ENCODE measurements at regions of chr14 and their contacts with region 1.

Region 1: GRCh38 chr14:21987937-21988336 is 314.3 kb upstream of the OR4E1 start:
- DNase-seq: peak; percentile 25
- ATAC-seq: peak; percentile 72
- H3K4me3 Mint-ChIP-seq: peak overlapping the region; percentile 57
- H3K27ac Mint-ChIP-seq: peak overlapping the region; percentile 86
- H3K4me1 Mint-ChIP-seq: peaks cover 28% of the 10 kb centered on the region
- H3K27me3 Mint-ChIP-seq: peaks cover 2% of the 10 kb centered on the region

Region 2: DNA sequence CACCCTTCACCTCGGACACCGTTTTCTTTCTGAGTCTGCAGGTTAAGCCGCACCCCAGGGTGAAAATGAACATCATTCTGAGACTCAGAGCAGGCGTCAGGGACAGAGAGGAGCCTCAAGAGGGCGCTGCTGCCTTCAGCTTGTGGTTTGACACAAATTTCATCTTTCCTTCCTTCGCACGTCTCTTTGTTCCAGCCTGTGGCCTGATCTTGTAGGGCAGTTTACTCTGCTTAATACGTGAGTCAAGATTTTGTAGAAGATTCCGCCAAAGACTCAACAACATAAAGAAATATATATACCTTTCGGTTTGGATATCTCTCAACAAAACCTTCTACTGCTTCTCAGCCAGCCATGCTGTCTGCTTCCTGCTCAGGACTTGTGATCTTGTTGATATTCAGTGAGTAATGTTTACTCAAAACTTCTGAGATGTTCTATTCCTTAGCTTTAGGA is 14.9 kb after region 1 on chr14:
- CTCF ChIA-PET with region 1: interaction called, 29 read pairs
- POLR2A ChIA-PET with region 1: no interaction called
- intact Hi-C with region 1: no loop called
- DNase-seq: peak; percentile 87
- ATAC-seq: peak; percentile 80
- H3K4me3 Mint-ChIP-seq: peak overlapping the region; percentile 80
- H3K27ac Mint-ChIP-seq: peak overlapping the region; percentile 83
- H3K4me1 Mint-ChIP-seq: peaks cover 26% of the 10 kb centered on the region
- H3K27me3 Mint-ChIP-seq: no peaks in the 10 kb centered on the region

Region 3: GRCh38 chr14:22039938-22040775 is 52.2 kb after region 1 on chr14:
- CTCF ChIA-PET with region 1: interaction called, 11 read pairs
- POLR2A ChIA-PET with region 1: no interaction called
- intact Hi-C with region 1: no loop called
- DNase-seq: peak; percentile 70
- ATAC-seq: peak; percentile 94
- H3K4me3 Mint-ChIP-seq: peak overlapping the region; percentile 73
- H3K27ac Mint-ChIP-seq: peak overlapping the region; percentile 70
- H3K4me1 Mint-ChIP-seq: peaks cover 12% of the 10 kb centered on the region
- H3K27me3 Mint-ChIP-seq: no peaks in the 10 kb centered on the region

Region 4: DNA sequence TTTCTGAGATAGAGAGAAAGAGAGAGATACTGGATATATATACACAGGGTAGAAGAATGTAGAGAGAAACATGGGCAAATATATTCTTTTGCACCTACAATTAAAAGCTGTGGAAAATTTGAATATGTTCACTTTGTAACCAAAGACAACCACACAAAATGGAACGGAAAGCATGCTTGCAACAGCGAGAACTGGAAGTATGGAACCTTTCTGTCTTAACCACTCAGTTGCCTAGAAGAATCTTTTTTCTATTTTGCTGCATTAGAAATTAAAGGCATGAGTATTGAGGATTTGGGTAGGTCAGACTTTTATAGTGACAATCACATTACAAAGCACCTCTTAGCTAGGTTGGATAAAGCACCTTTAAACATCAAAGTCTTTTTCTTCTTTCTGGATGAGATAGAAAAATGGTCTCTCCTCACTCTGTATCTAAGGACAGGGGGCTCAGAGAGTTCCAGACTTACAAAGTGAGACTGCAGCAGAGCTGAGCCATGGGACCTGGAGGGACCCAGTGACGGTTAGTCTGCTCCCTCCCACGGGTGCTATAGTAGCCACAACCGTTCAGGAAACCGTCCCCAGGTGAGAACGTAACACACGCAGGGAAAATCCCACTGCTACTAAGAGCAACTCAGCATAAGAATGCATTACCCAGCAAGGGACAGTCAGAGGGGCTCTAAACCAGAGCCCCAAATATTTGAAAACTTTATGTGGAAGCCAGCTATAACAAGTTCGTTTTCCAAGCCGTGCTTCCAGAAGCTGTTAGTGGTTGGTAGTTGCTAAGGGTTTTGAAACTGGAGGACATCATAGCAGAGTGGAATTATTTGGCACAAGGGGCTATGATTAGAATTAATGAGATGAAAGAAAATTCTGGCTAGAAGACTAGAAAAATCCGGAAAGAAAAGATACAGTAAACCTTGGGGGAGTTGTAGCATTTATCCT is 504.0 kb after region 1 on chr14:
- CTCF ChIA-PET with region 1: no interaction called
- POLR2A ChIA-PET with region 1: no interaction called
- intact Hi-C with region 1: loop called in 1 of 2 experiments (anchors 5 kb)
- DNase-seq: peak; percentile 65
- ATAC-seq: peak; percentile 37
- H3K4me3 Mint-ChIP-seq: peak overlapping the region; percentile 84
- H3K27ac Mint-ChIP-seq: peak overlapping the region; percentile 99
- H3K4me1 Mint-ChIP-seq: peaks cover 7% of the 10 kb centered on the region
- H3K27me3 Mint-ChIP-seq: no peaks in the 10 kb centered on the region

Region 5: GRCh38 chr14:22653012-22653621 is 665.2 kb after region 1 on chr14:
- CTCF ChIA-PET with region 1: interaction called, 3 read pairs
- POLR2A ChIA-PET with region 1: no interaction called
- intact Hi-C with region 1: loop called in 1 of 2 experiments (anchors 10 kb)
- DNase-seq: peak; percentile 75
- ATAC-seq: peak; percentile 80
- H3K4me3 Mint-ChIP-seq: no peak overlapping the region
- H3K27ac Mint-ChIP-seq: no peak overlapping the region
- H3K4me1 Mint-ChIP-seq: no peaks in the 10 kb centered on the region
- H3K27me3 Mint-ChIP-seq: no peaks in the 10 kb centered on the region